Activated naive CD4-positive, alpha-beta T cell treated with anti-CD3 and anti-CD28 coated beads for 36 hours (primary cell): ENCODE measurements at regions of chr6 and their contacts with region 1.

Region 1: DNA sequence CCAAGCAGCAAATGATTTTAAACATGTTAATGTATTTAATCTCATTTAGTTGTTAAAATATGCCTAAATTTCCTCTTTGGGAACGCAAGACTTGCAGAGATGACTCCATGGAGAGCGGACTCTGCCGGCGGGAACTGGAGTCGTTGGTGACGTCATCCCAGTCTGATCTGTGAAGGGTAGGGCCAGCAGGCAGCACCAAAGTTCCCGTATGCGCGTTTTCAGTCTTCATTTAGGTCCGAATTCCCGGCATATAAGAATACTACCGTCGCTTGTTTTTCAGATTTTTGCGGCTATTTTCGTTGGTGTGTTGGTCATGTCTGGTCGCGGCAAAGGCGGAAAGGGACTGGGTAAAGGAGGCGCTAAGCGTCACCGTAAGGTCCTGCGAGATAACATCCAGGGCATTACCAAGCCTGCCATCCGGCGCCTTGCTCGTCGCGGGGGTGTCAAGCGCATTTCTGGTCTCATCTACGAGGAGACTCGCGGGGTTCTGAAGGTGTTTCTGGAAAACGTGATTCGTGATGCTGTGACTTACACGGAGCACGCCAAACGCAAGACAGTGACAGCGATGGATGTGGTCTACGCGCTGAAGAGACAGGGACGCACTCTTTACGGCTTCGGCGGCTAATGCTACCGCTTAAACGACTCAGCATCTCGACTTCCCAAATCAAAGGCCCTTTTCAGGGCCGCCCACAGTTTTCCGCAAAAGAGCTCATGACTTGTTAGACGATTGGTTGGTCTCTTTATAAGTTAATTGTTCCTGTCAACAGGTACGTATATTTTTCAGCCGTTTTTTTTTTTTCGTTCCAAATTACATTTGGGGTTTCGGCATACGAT is 117.3 kb downstream of the HFE start:
- DNase-seq: peak; percentile 94
- H3K4me3 Mint-ChIP-seq: no peak overlapping the region
- H3K27ac Mint-ChIP-seq: no peak overlapping the region
- H3K4me1 Mint-ChIP-seq: peaks cover 20% of the 10 kb centered on the region
- H3K27me3 Mint-ChIP-seq: no peaks in the 10 kb centered on the region

Region 2: DNA sequence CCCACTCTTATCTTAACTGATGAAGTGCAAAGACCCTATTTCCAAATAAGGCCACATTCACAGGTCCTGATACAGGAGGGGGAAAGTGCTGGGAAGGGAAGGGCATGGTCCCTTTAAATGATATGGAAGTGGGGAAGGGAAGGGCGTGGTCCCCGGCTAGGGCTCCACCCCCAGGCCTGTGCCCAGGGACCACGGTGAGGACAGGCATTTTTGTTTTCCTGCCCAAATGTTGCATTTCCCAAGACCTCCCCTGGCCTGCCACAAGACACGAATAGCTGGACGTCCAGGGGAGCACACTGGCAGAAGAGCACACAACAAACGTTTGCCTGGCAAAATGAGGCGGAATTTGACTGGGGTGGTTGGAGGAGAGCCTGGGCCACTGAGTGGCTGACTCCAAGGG is 133.4 kb before region 1 on chr6:
- CTCF ChIA-PET with region 1: no interaction called
- intact Hi-C with region 1: no loop called
- DNase-seq: no peak
- H3K4me3 Mint-ChIP-seq: no peak overlapping the region
- H3K27ac Mint-ChIP-seq: no peak overlapping the region
- H3K4me1 Mint-ChIP-seq: peaks cover under 1% of the 10 kb centered on the region
- H3K27me3 Mint-ChIP-seq: no peaks in the 10 kb centered on the region

Region 3: DNA sequence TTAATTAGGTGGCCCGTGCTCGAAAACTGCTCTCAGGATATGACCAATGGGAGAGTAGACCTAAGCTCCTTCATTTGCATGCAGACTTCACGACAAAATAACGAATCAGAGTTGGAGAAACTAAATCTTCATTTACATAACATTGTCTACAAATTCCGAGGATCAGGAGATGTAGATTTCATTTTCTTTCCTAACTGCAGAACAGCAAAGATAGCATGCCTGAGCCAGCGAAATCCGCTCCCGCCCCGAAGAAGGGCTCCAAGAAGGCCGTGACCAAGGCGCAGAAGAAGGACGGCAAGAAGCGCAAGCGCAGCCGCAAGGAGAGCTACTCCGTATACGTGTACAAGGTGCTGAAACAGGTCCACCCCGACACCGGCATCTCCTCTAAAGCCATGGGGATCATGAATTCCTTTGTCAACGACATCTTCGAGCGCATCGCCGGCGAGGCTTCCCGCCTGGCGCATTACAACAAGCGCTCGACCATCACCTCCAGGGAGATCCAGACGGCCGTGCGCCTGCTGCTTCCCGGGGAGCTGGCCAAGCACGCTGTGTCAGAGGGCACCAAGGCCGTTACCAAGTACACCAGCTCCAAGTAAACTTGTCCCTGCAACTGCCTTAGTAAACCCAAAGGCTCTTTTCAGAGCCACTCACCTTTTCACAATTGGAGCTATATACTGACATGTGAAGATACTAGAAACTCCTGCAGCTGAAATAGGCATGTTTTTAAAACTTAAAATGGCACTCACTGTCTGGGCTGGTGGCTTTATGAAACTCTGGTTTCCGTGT is 20.8 kb before region 1 on chr6:
- CTCF ChIA-PET with region 1: no interaction called
- intact Hi-C with region 1: loop called (anchors 1 kb)
- DNase-seq: peak; percentile 73
- H3K4me3 Mint-ChIP-seq: peak overlapping the region; percentile 86
- H3K27ac Mint-ChIP-seq: peak overlapping the region; percentile 89
- H3K4me1 Mint-ChIP-seq: peaks cover 30% of the 10 kb centered on the region
- H3K27me3 Mint-ChIP-seq: no peaks in the 10 kb centered on the region